ENCODE measurements at regions of chr6 and their contacts with region 1.

Region 1: GRCh38 chr6:43070028-43070632 is 6.0 kb upstream of the PTK7 start:
- DNase-seq: peak in 1 of 2 donors; percentile 46
- H3K4me3 ChIP-seq: no peak overlapping the region
- H3K27ac ChIP-seq: peak overlapping the region; percentile 55 to 94
- H3K4me1 ChIP-seq: peaks cover 0 to 4% of the 10 kb centered on the region in 2 donors
- H3K27me3 ChIP-seq: no peaks in the 10 kb centered on the region
- CTCF ChIP-seq: peak; percentile 45 to 70 (median 58)
- POLR2A ChIP-seq: no peak

Region 2: GRCh38 chr6:43129434-43130194 is 59.5 kb after region 1 on chr6:
- intact Hi-C with region 1: loop called (anchors 10 kb)
- DNase-seq: peak in 1 of 2 donors; percentile 51
- H3K4me3 ChIP-seq: no peak overlapping the region
- H3K27ac ChIP-seq: peak overlapping the region in 1 of 2 donors; percentile 7
- H3K4me1 ChIP-seq: peaks cover 0 to 22% of the 10 kb centered on the region in 2 donors
- H3K27me3 ChIP-seq: no peaks in the 10 kb centered on the region
- CTCF ChIP-seq: peak; percentile 54 to 64 (median 58)
- POLR2A ChIP-seq: no peak

Measured in uterus (tissue), 4 donors.